Activated CD8-positive, alpha-beta T cell treated with anti-CD3 and anti-CD28 coated beads for 36 hours (primary cell): ENCODE measurements at regions of chr4 and their contacts with region 1.

Region 1: DNA sequence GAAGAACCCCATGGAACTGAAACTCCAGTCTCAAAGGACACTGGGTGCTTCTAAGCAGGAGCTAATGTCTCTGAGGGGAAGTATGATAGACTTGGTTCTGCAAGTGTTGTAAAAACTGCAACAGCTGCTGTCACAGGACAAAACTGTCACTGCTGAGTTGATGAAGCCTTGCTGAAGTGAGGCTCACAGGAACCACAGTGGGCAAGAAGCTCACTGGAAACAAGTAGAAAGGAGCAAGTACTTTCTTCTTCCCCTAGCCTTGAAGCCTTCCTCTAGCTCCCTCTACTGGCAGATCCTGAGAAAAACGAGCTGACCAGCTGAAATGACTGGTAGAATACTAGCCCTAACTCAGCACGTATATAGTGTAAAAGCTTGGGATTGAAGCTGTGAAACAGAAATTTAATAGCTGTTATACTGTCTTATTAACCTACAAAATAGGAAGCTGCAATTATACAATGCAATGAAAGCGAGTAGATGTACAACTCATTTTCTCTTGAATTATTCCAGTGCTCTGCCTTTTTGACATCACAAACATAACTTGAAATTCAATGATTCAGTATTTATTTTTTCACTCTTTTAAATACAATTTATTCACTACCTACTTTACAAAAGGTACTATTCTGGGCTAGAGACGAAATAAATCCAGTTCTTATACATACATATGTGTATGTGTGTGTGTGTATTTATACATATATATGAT is 91.4 kb downstream of the GABRB1 start:
- DNase-seq: peak; percentile 60
- ATAC-seq: peak; percentile 70
- H3K4me3 Mint-ChIP-seq: no peak overlapping the region
- H3K27ac Mint-ChIP-seq: no peak overlapping the region
- H3K4me1 Mint-ChIP-seq: no peaks in the 10 kb centered on the region
- H3K27me3 Mint-ChIP-seq: peaks cover 3% of the 10 kb centered on the region
- CTCF ChIP-seq: peak; percentile 85

Region 2: DNA sequence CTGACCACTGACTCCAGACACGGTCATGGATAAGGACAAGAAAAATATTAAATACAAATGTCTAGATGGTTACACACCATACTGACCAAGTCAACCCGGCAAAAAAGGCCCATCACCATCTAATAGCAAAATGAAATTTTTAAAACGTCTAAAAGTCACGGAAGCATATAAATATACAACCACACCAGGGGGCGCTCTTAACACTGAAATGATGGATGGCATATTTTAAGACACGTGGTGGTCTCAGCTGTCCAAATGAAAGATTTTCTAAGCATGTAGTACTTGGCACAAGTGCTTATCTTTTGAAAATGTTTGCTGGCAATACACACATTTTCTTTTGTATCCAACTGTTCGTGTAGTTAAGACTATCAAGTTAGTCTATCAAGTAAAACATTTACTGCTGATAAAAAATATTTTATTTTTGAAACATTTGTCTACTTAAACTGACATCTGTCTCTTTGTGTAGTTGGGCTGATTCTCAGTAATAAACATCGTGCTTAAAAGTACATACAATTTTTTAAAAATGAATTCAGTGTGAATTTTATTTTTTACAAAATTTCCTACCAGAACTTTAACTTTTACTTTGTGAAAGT is 278.3 kb before region 1 on chr4:
- CTCF ChIA-PET with region 1: interaction called, 12 read pairs
- POLR2A ChIA-PET with region 1: no interaction called
- intact Hi-C with region 1: no loop called
- DNase-seq: peak; percentile 79
- ATAC-seq: peak; percentile 55
- H3K4me3 Mint-ChIP-seq: no peak overlapping the region
- H3K27ac Mint-ChIP-seq: no peak overlapping the region
- H3K4me1 Mint-ChIP-seq: no peaks in the 10 kb centered on the region
- H3K27me3 Mint-ChIP-seq: no peaks in the 10 kb centered on the region
- CTCF ChIP-seq: peak; percentile 81

Region 3: GRCh38 chr4:47084795-47085194 is 37.9 kb before region 1 on chr4:
- CTCF ChIA-PET with region 1: no interaction called
- POLR2A ChIA-PET with region 1: no interaction called
- intact Hi-C with region 1: no loop called
- DNase-seq: no peak
- ATAC-seq: no peak
- H3K4me3 Mint-ChIP-seq: no peak overlapping the region
- H3K27ac Mint-ChIP-seq: no peak overlapping the region
- H3K4me1 Mint-ChIP-seq: no peaks in the 10 kb centered on the region
- H3K27me3 Mint-ChIP-seq: peaks cover 2% of the 10 kb centered on the region
- CTCF ChIP-seq: no peak

Region 4: DNA sequence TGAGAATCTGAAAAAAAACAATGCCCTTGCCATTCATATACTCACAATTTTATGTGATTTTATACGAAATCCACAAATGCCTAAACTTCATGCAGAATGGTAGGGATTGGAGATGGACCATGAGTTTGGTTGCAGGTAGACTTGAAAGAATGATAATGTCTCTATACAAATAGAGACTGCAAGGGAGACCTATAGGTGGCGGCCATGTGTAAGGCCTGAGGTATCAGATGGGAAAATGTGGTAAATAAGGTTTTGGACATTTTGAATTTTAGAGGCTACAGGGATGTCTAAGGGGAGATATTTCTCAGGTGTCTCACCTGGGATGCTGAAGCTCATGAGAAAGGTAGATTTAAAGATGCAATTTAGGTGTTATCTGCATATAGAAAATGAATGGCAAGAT is 13.4 kb before region 1 on chr4:
- CTCF ChIA-PET with region 1: interaction called, 24 read pairs
- POLR2A ChIA-PET with region 1: no interaction called
- intact Hi-C with region 1: no loop called
- DNase-seq: no peak
- ATAC-seq: no peak
- H3K4me3 Mint-ChIP-seq: no peak overlapping the region
- H3K27ac Mint-ChIP-seq: no peak overlapping the region
- H3K4me1 Mint-ChIP-seq: no peaks in the 10 kb centered on the region
- H3K27me3 Mint-ChIP-seq: peaks cover 8% of the 10 kb centered on the region
- CTCF ChIP-seq: no peak

Region 5: GRCh38 chr4:47135210-47135609 is 12.5 kb after region 1 on chr4:
- CTCF ChIA-PET with region 1: interaction called, 14 read pairs
- POLR2A ChIA-PET with region 1: interaction called, 3 read pairs
- intact Hi-C with region 1: no loop called
- DNase-seq: no peak
- ATAC-seq: no peak
- H3K4me3 Mint-ChIP-seq: no peak overlapping the region
- H3K27ac Mint-ChIP-seq: no peak overlapping the region
- H3K4me1 Mint-ChIP-seq: no peaks in the 10 kb centered on the region
- H3K27me3 Mint-ChIP-seq: no peaks in the 10 kb centered on the region
- CTCF ChIP-seq: no peak

Region 6: GRCh38 chr4:47155919-47156318 is 33.2 kb after region 1 on chr4:
- CTCF ChIA-PET with region 1: no interaction called
- POLR2A ChIA-PET with region 1: no interaction called
- intact Hi-C with region 1: no loop called
- DNase-seq: no peak
- ATAC-seq: no peak
- H3K4me3 Mint-ChIP-seq: no peak overlapping the region
- H3K27ac Mint-ChIP-seq: no peak overlapping the region
- H3K4me1 Mint-ChIP-seq: peaks cover 3% of the 10 kb centered on the region
- H3K27me3 Mint-ChIP-seq: peaks cover 5% of the 10 kb centered on the region
- CTCF ChIP-seq: no peak

Region 7: GRCh38 chr4:47383829-47384427 is 261.2 kb after region 1 on chr4:
- CTCF ChIA-PET with region 1: interaction called, 11 read pairs
- POLR2A ChIA-PET with region 1: no interaction called
- intact Hi-C with region 1: no loop called
- DNase-seq: no peak
- ATAC-seq: no peak
- H3K4me3 Mint-ChIP-seq: no peak overlapping the region
- H3K27ac Mint-ChIP-seq: no peak overlapping the region
- H3K4me1 Mint-ChIP-seq: no peaks in the 10 kb centered on the region
- H3K27me3 Mint-ChIP-seq: peaks cover 8% of the 10 kb centered on the region
- CTCF ChIP-seq: peak; percentile 77